PC-9 (cell line): ENCODE measurements at regions of chr9 and their contacts with region 1.

Region 1: DNA sequence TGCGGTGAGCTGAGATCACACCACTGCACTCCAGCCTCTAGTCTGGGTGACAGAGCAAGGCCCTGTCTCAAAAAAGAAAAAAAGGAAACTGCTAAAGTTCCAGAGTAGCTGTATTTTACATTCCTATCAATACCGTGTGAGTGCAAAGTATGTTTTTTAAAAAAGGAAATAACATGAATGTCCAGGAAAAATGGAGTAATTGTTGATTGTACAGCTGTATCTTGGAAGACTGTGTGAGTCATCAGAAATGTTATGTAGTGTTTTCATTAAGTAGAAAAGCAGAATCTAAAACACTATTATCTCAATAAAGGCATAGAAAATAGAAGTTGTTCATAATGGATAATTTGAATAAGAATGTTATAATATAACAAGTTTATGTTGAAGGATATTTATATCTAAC is 53.9 kb downstream of the ZCCHC7 start:
- DNase-seq: no peak
- H3K4me3 ChIP-seq: no peak overlapping the region
- H3K27ac ChIP-seq: no peak overlapping the region
- H3K4me1 ChIP-seq: no peaks in the 10 kb centered on the region
- H3K27me3 ChIP-seq: no peaks in the 10 kb centered on the region
- CTCF ChIP-seq: no peak

Region 2: DNA sequence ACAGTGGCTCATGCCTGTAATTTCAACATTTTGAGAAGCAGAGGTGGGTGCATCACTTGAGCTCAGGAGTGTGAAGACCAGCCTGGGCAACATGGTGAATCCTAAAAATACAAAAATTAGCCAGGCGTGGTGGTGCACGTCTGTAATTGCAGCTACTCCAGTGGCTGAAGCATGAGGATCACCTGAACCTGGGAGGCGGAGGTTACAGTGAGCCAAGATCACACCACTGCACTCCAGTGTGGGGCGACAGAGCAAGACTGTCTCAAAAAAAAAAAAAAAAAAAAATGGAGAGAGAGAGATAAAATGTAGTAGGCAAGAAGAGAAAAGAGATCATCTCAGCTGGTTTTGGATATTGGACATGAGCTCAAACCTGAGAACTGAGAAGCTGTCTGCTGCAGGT is 77.6 kb before region 1 on chr9:
- CTCF ChIA-PET with region 1: no interaction called
- POLR2A ChIA-PET with region 1: interaction called, 10 read pairs
- intact Hi-C with region 1: no loop called
- DNase-seq: no peak
- H3K4me3 ChIP-seq: no peak overlapping the region
- H3K27ac ChIP-seq: no peak overlapping the region
- H3K4me1 ChIP-seq: peaks cover 16% of the 10 kb centered on the region; the same call in 1 of the 2 replicates
- H3K27me3 ChIP-seq: no peaks in the 10 kb centered on the region
- CTCF ChIP-seq: no peak